ENCODE measurements at regions of chr1 and their contacts with region 1.

Region 1: DNA sequence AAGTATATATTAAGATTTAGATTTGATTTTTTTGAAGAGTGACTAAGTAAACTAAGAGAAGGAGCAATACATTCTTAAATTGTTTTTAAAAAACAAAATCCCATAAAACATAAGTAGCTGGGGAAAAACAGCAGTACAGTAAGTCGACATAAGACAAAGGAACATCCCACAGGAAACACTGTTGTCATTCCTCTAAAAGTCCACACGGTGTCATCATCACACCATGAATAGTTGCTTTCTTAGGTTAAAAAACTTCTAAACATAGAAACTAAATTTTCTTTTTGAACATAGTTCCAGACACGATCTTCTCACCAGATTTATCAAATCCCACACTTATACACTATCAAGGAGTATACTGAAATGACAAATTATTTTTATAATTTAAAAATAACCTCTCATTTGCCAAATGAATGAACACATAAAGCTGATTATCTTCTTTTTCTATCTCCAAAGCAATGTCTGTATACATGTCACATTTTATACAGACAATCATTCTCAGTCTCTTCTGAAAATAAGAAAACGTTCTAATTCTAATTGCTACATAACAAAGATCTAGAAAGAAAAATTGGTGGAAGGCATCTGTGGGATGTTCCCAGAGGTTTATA is 15.8 kb downstream of the ODF2L start:
- DNase-seq: peak; percentile 76
- ATAC-seq: peak; percentile 62; the same call in 1 of the 2 replicates
- H3K4me3 ChIP-seq: no peak overlapping the region
- H3K27ac ChIP-seq: no peak overlapping the region
- H3K4me1 ChIP-seq: no peaks in the 10 kb centered on the region
- H3K27me3 ChIP-seq: no peaks in the 10 kb centered on the region
- CTCF ChIP-seq: peak; percentile 84

Region 2: DNA sequence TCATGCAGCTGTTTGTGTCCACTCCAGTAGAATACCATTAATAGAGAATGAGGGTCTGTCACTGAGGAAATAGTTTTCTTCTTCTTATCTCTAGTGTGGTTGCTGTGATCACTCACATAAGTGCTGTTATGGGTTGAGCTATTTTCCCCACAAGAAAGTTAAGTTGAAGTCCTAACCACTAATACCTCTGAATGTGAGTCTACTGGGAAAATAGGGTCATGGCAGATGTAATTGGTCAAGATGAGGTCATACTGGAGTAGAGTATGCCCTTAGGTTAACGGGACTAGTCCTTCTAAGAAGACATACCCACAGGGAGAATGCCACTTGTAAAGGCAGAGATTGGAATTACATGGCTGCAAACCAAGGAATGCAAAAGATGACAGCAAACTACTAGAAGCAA is 153.3 kb before region 1 on chr1:
- CTCF ChIA-PET with region 1: no interaction called
- POLR2A ChIA-PET with region 1: no interaction called
- intact Hi-C with region 1: no loop called
- DNase-seq: no peak
- ATAC-seq: no peak
- H3K4me3 ChIP-seq: no peak overlapping the region
- H3K27ac ChIP-seq: no peak overlapping the region
- H3K4me1 ChIP-seq: no peaks in the 10 kb centered on the region
- H3K27me3 ChIP-seq: peaks cover 48% of the 10 kb centered on the region
- CTCF ChIP-seq: no peak

Region 3: DNA sequence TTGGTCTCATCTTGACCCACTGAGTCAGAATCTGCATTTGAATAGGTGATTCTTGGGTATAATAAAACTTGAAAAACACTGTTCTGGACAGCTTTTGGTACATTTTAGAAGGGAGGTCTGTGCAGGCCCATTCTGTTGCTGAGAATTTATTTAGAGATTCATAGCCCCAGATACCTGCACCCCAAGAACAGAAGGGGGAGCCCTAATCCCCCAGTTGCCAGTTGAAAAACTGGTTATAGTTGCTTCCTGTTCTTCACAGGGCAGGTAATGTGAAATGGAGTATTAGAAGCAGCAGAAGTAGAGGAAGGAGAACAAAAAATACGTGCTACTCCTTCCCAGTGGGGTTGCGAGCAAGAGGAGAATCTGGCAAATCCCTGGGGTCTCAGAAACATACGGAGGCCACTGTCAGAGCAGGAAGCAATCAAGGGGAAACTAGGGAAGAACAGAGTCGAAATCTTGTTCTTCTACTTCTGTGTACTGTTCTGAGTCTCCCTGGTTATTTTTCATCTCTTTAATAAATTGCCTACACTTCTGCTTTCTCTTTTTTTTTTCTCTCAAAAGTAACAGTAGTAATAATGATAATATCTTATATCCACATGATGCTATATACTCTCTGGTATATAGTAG is 39.0 kb after region 1 on chr1:
- CTCF ChIA-PET with region 1: no interaction called
- POLR2A ChIA-PET with region 1: no interaction called
- intact Hi-C with region 1: loop called (anchors 2 kb)
- DNase-seq: peak; percentile 64
- ATAC-seq: peak; percentile 37
- H3K4me3 ChIP-seq: no peak overlapping the region
- H3K27ac ChIP-seq: no peak overlapping the region
- H3K4me1 ChIP-seq: peaks cover 40% of the 10 kb centered on the region
- H3K27me3 ChIP-seq: no peaks in the 10 kb centered on the region
- CTCF ChIP-seq: peak; percentile 75

Region 4: GRCh38 chr1:86470859-86471258 is 90.5 kb after region 1 on chr1:
- CTCF ChIA-PET with region 1: no interaction called
- POLR2A ChIA-PET with region 1: interaction called, 4 read pairs
- intact Hi-C with region 1: loop called (anchors 1 kb)
- DNase-seq: no peak
- ATAC-seq: no peak
- H3K4me3 ChIP-seq: no peak overlapping the region
- H3K27ac ChIP-seq: no peak overlapping the region
- H3K4me1 ChIP-seq: no peaks in the 10 kb centered on the region
- H3K27me3 ChIP-seq: no peaks in the 10 kb centered on the region
- CTCF ChIP-seq: no peak

Region 5: DNA sequence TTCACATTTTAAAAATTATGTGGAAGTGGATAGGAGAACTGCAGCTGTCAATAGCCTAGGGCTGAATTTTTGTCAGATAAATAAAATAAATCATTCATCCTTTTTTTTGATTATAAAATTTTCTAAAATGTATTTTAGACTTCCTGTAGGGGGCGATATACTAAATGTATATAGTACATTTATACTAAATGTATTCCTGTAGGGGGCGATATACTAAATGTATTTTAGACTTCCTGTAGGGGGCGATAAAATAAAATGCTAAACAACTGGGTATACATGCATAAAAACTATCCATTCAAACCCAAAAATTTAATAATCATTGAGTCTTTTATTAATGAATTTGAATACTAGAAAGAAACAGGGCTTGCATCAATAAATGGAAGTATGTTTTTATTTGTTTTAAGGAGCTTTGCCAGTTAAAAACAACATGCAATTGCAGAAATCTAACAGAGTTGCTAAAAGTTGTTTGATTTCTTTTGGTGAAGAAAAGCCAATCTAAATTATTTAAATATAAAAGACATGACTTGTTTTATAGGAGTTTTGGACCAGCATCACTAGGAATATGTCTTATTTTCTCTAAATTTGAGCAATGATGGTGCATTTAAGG is 119.7 kb after region 1 on chr1:
- CTCF ChIA-PET with region 1: interaction called, 7 read pairs
- POLR2A ChIA-PET with region 1: no interaction called
- intact Hi-C with region 1: loop called (anchors 1 kb)
- DNase-seq: peak; percentile 63
- ATAC-seq: no peak
- H3K4me3 ChIP-seq: no peak overlapping the region
- H3K27ac ChIP-seq: no peak overlapping the region
- H3K4me1 ChIP-seq: peaks cover 10% of the 10 kb centered on the region
- H3K27me3 ChIP-seq: no peaks in the 10 kb centered on the region
- CTCF ChIP-seq: peak; percentile 99

Region 6: GRCh38 chr1:86507935-86508582 is 127.7 kb after region 1 on chr1:
- CTCF ChIA-PET with region 1: interaction called, 4 read pairs
- POLR2A ChIA-PET with region 1: no interaction called
- intact Hi-C with region 1: loop called (anchors 1 kb)
- DNase-seq: peak; percentile 50
- ATAC-seq: peak; percentile 56
- H3K4me3 ChIP-seq: peak overlapping the region; percentile 33; the same call in 1 of the 2 replicates
- H3K27ac ChIP-seq: no peak overlapping the region
- H3K4me1 ChIP-seq: peaks cover 16% of the 10 kb centered on the region
- H3K27me3 ChIP-seq: no peaks in the 10 kb centered on the region
- CTCF ChIP-seq: peak; percentile 66

Region 7: GRCh38 chr1:86687595-86687994 is 307.2 kb after region 1 on chr1:
- CTCF ChIA-PET with region 1: no interaction called
- POLR2A ChIA-PET with region 1: no interaction called
- intact Hi-C with region 1: loop called (anchors 10 kb)
- DNase-seq: peak; percentile 43
- ATAC-seq: no peak
- H3K4me3 ChIP-seq: no peak overlapping the region
- H3K27ac ChIP-seq: no peak overlapping the region
- H3K4me1 ChIP-seq: no peaks in the 10 kb centered on the region
- H3K27me3 ChIP-seq: no peaks in the 10 kb centered on the region
- CTCF ChIP-seq: peak; percentile 56

Region 8: GRCh38 chr1:86741947-86742572 is 361.7 kb after region 1 on chr1:
- CTCF ChIA-PET with region 1: no interaction called
- POLR2A ChIA-PET with region 1: no interaction called
- intact Hi-C with region 1: loop called (anchors 5 kb)
- DNase-seq: peak; percentile 66
- ATAC-seq: peak; percentile 27; the same call in 1 of the 2 replicates
- H3K4me3 ChIP-seq: no peak overlapping the region
- H3K27ac ChIP-seq: no peak overlapping the region
- H3K4me1 ChIP-seq: no peaks in the 10 kb centered on the region
- H3K27me3 ChIP-seq: no peaks in the 10 kb centered on the region
- CTCF ChIP-seq: peak; percentile 84

Region 9: DNA sequence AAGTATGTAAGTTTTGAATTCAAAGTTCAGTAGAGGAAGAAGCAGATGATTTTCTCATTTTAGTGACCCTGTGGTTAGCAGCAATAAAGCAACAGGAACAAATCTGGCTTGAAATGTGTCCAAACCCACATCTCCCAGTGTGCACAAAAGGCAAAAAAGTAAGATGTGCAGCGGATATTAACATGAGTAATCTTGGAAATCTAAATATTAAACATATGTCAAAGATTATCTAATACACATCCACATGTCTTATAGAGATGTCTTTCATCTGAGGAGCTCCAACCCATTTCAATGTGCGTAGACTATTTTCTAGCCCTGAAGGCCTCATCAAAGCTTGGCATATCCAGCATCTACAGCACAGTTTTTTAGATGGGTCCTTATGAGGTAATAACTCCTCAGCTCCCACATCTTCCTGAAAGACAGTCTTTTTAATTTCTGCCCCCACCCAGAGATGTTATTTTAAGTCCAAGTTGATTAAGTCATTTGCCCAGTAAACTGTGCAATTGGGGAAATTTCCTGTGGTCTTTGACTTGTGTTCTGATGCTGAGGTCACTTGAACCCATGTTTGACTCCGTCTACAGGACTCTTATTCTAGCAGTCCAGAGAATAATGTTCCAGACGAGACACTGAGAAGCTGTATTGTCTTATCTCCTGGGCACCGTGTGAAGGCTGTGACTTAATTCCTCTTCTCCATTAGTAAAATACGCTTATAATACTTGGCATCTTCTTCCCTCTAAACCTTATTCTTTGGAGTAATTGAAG is 1022.1 kb after region 1 on chr1:
- CTCF ChIA-PET with region 1: no interaction called
- POLR2A ChIA-PET with region 1: no interaction called
- intact Hi-C with region 1: no loop called
- DNase-seq: peak; percentile 79
- ATAC-seq: peak; percentile 55
- H3K4me3 ChIP-seq: no peak overlapping the region
- H3K27ac ChIP-seq: peak overlapping the region; percentile 33
- H3K4me1 ChIP-seq: peaks cover 49% of the 10 kb centered on the region
- H3K27me3 ChIP-seq: no peaks in the 10 kb centered on the region
- CTCF ChIP-seq: no peak